Activated CD8-positive, alpha-beta memory T cell treated with anti-CD3 and anti-CD28 coated beads, Interleukin-2, amount 10 ng/mL, durations not matched to agents 7 days and 5 days (primary cell): ENCODE measurements at regions of chr12 and their contacts with region 1.

Region 1: DNA sequence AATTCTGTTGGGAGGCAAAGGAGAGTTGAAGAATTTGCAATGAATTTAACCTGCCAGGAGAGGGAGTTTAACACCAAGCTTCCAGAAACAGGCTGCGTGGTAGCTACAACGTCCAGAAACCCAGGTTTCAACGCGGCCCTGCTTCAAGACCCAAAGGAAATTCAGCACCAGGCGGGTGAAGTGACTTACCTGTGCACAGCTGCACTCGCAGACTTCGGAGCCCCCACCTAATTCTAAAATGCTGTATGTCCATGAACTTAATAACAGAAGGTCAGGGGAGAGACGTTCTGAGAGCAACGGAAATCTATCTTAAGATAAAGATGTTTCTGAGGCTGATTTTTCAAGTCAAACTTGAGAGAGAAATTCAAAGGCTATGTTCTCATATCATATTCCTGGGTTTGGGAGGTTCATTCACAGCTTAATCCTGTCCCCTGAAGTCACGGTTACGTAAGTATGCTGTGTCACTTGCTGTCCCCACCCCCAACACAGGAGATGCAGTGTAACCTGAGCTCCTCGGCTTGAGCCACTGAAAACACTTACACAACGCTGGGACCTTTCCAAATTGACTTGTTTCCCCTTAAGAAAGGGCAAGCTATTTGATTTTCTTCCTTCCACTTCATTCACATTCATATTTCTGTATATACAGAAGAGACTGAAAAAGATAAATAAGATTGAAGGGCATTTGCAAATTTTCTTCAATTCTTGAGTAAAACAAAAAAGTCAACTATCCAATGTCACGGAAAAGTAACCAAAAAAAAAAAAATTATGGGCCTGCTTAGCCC is 22.7 kb downstream of the CLIP1 start:
- DNase-seq: peak; percentile 68
- ATAC-seq: peak; percentile 87
- H3K4me3 Mint-ChIP-seq: peak overlapping the region; percentile 45
- H3K27ac Mint-ChIP-seq: peak overlapping the region; percentile 68
- H3K4me1 Mint-ChIP-seq: peaks cover 34% of the 10 kb centered on the region
- H3K27me3 Mint-ChIP-seq: no peaks in the 10 kb centered on the region

Region 2: GRCh38 chr12:122182887-122183585 is 216.7 kb before region 1 on chr12 and contains the start of gene LRRC43:
- CTCF ChIA-PET with region 1: no interaction called
- DNase-seq: peak; percentile 51
- ATAC-seq: peak; percentile 88
- H3K4me3 Mint-ChIP-seq: peak within 1 kb of the TSS; percentile 57
- H3K27ac Mint-ChIP-seq: no peak within 1 kb of the TSS
- H3K4me1 Mint-ChIP-seq: peaks cover 19% of the 10 kb centered on the region
- H3K27me3 Mint-ChIP-seq: peaks cover 30% of the 10 kb centered on the region
- total RNA-seq, gene LRRC43: 0.67 TPM in 1 of 2 experiments, not detected in the other

Region 3: DNA sequence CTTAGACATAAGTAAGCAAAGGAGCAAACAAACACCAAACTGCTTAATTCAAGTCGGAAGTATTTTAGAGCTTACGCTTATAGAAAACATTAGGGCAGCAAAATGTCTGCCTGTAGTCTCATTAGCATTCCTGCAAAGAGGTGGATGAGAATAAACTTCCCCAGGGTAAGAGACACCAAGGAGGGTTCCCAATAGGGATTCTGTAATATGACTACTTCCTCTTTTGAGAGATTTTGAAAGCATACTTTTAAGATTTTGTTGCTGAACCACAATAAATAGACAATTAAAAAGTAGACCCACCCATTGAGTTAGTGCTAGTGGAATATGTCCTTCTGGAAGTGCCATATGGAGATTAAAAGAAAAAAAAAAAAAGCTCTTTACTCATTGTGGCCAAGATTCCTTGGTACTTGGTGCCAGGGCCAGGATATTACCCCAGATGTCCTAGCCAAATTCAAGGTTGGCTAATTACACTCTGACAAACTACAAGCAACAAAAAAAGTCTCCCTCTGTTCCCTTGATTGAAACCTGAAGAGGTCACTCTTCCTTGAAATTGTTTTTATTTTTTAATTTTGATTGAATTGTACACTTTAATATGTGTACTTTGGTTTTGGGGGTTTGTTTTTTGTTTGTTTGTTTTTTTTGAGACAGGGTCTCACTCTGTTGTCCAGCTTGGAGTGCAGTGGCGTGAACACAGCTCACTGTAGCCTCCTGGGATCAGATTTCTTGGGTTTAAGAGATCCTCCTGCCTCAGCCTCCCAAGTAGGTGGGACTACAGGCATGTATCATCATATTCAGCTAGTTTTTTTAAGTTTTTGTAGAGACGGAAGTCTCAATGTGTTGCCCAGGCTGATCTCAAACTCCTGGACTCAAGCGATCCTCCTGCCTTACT is 14.0 kb after region 1 on chr12:
- CTCF ChIA-PET with region 1: interaction called, 22 read pairs
- DNase-seq: no peak
- ATAC-seq: no peak
- H3K4me3 Mint-ChIP-seq: no peak overlapping the region
- H3K27ac Mint-ChIP-seq: peak overlapping the region; percentile 94
- H3K4me1 Mint-ChIP-seq: peaks cover 34% of the 10 kb centered on the region
- H3K27me3 Mint-ChIP-seq: no peaks in the 10 kb centered on the region

Region 4: GRCh38 chr12:122421821-122422729 is 22.3 kb after region 1 on chr12 and contains the start of gene CLIP1:
- CTCF ChIA-PET with region 1: interaction called, 11 read pairs
- DNase-seq: peak; percentile 70
- ATAC-seq: peak; percentile 83
- H3K4me3 Mint-ChIP-seq: peak within 1 kb of the TSS; percentile 83
- H3K27ac Mint-ChIP-seq: peak within 1 kb of the TSS; percentile 83
- H3K4me1 Mint-ChIP-seq: peaks cover 37% of the 10 kb centered on the region
- H3K27me3 Mint-ChIP-seq: no peaks in the 10 kb centered on the region
- total RNA-seq, gene CLIP1: 56.2 to 75.7 TPM

Region 5: DNA sequence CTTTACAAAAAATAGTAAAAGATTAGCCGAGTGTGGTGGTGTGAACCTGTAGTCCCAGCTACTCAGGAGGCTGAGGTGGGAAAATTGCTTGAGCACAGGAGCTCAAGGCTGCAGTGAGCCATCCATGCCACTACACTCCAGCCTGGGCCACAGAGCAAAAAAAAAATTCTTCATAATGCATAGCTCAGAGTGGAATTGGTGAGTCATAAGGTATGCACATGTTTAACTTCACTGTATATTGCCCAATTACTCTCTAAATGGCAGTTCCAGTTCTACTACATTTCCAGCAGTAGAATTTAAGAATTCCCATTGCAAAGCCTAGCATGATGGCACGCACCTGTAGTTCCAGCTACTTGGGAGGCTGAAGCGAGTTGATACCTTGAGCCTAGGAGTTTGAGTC is 49.6 kb after region 1 on chr12:
- CTCF ChIA-PET with region 1: interaction called, 10 read pairs
- DNase-seq: no peak
- ATAC-seq: no peak
- H3K4me3 Mint-ChIP-seq: no peak overlapping the region
- H3K27ac Mint-ChIP-seq: no peak overlapping the region
- H3K4me1 Mint-ChIP-seq: peaks cover 23% of the 10 kb centered on the region
- H3K27me3 Mint-ChIP-seq: no peaks in the 10 kb centered on the region

Region 6: GRCh38 chr12:122459211-122459610 is 59.4 kb after region 1 on chr12:
- CTCF ChIA-PET with region 1: interaction called, 13 read pairs
- DNase-seq: no peak
- ATAC-seq: no peak
- H3K4me3 Mint-ChIP-seq: no peak overlapping the region
- H3K27ac Mint-ChIP-seq: no peak overlapping the region
- H3K4me1 Mint-ChIP-seq: peaks cover 23% of the 10 kb centered on the region
- H3K27me3 Mint-ChIP-seq: no peaks in the 10 kb centered on the region

Region 7: DNA sequence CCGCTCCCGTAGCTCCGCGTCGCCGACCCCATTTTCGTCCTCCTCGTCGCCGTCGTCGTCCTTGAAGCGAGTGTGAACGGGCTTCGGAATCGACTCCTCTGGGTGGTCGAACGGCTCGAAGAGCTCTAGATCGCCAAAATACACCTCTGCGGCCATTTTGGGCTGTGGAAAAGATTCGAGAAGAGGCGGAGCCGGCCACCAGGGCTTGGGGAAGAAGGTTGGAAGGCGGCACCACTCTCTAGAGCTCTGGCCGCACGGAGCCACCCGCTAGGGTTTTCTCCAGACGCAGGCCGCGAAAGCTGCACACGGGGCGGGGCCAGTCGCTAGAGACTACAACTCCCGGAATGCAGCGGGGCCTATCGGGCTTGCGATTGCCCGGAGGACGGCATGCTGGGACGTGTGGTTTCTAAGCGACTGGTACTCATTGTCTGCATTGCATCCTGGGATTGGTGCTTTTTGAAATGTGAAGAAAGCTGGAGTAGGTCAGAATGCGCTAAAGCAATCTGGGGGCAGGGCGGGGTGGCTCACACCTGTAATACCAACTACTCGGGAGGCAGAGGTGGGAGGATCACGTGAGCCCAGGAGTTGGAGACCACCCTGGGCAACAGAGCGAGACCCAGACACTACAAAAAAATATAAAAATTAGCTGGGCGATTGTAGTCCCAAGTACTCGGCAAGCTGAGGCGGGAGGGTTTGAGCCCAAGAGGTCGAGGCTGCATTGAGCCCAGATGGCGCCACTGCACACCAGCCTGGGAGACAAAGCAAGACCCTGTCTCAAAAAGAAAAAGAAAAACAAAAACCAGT is 101.1 kb after region 1 on chr12 and contains the start of gene ZCCHC8:
- CTCF ChIA-PET with region 1: interaction called, 16 read pairs
- DNase-seq: peak; percentile 99
- ATAC-seq: peak; percentile 94
- H3K4me3 Mint-ChIP-seq: peak within 1 kb of the TSS; percentile 97
- H3K27ac Mint-ChIP-seq: peak within 1 kb of the TSS; percentile 99
- H3K4me1 Mint-ChIP-seq: peaks cover 36% of the 10 kb centered on the region
- H3K27me3 Mint-ChIP-seq: no peaks in the 10 kb centered on the region
- total RNA-seq, gene ZCCHC8: 45.2 to 45.3 TPM